HEK293 (cell line): ENCODE measurements at regions of chr2 and their contacts with region 1.

Region 1: DNA sequence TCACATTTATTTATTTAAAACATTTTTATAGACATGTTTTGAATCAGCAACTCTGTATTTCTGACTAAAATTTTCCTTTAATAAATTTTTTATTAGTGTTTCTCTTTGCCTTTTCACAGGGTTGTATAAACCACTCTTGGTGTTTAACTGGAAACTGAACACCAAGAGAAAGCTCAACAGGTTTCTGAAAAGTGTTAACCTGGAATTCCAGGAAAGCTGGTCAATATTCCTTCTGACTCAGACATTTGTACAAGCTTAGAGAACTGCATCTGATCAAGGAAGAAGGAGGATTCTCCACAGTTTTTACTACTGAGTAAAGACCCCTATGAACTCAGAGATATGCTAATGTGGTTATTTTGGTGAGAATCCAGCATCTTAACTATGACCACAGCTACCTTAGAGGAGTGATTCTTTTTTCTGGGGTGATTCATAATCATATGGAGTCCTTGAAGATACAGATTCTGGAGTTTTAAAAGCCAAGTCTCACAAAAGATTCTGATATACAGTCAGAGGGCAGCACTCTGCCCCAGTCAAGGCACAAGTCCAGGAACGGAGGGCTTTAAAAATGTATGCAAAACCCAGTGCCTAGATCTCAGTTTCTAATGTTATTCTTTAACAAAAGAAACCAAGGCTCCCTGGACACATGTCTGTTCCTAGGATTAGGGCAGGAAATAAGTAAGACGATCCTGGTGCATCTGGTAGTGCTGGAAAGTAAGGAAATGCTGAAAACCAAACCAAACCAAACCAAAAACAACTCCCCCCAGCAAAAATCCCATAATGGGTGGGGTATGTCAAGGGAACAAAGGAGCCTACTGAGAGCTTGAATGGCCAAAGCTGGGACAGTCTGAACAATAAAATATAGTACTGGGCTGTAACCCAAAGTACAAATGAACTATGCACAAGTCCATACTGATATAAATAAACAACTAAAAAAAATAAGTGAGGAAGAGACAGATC is 85.1 kb upstream of the FZD5 start:
- H3K4me3 ChIP-seq: no peak overlapping the region
- H3K27ac ChIP-seq: no peak overlapping the region
- H3K4me1 ChIP-seq: no peaks in the 10 kb centered on the region
- CTCF ChIP-seq: no peak

Region 2: GRCh38 chr2:207777124-207777523 is 77.6 kb before region 1 on chr2:
- CTCF ChIA-PET with region 1: interaction called, 10 read pairs
- POLR2A ChIA-PET with region 1: no interaction called
- H3K4me3 ChIP-seq: no peak overlapping the region
- H3K27ac ChIP-seq: no peak overlapping the region
- H3K4me1 ChIP-seq: 0 out of 2 replicates have a peak, but pooled peaks cover under 1% of the 10 kb centered on the region
- CTCF ChIP-seq: no peak